Activated B cell treated with CpG ODN at 0.5 μM for 24 hours (primary cell): ENCODE measurements at regions of chr18 and their contacts with region 1.

Region 1: GRCh38 chr18:58699551-58699950 is 28.3 kb downstream of the MALT1 start:
- DNase-seq: no peak
- ATAC-seq: no peak
- H3K4me3 Mint-ChIP-seq: no peak overlapping the region
- H3K27ac Mint-ChIP-seq: no peak overlapping the region
- H3K4me1 Mint-ChIP-seq: peaks cover 7% of the 10 kb centered on the region
- H3K27me3 Mint-ChIP-seq: no peaks in the 10 kb centered on the region
- CTCF ChIP-seq: no peak

Region 2: GRCh38 chr18:58639751-58640427 is 59.7 kb before region 1 on chr18:
- CTCF ChIA-PET with region 1: no interaction called
- POLR2A ChIA-PET with region 1: no interaction called
- intact Hi-C with region 1: no loop called
- DNase-seq: no peak
- ATAC-seq: peak; percentile 62
- H3K4me3 Mint-ChIP-seq: peak overlapping the region; percentile 21
- H3K27ac Mint-ChIP-seq: peak overlapping the region; percentile 71
- H3K4me1 Mint-ChIP-seq: peaks cover 22% of the 10 kb centered on the region
- H3K27me3 Mint-ChIP-seq: no peaks in the 10 kb centered on the region
- CTCF ChIP-seq: no peak

Region 3: GRCh38 chr18:58716060-58716756 is 16.7 kb after region 1 on chr18:
- CTCF ChIA-PET with region 1: no interaction called
- POLR2A ChIA-PET with region 1: no interaction called
- intact Hi-C with region 1: loop called (anchors 2 kb)
- DNase-seq: no peak
- ATAC-seq: peak; percentile 58
- H3K4me3 Mint-ChIP-seq: peak overlapping the region; percentile 29
- H3K27ac Mint-ChIP-seq: peak overlapping the region; percentile 82
- H3K4me1 Mint-ChIP-seq: peaks cover 46% of the 10 kb centered on the region
- H3K27me3 Mint-ChIP-seq: no peaks in the 10 kb centered on the region
- CTCF ChIP-seq: no peak

Region 4: DNA sequence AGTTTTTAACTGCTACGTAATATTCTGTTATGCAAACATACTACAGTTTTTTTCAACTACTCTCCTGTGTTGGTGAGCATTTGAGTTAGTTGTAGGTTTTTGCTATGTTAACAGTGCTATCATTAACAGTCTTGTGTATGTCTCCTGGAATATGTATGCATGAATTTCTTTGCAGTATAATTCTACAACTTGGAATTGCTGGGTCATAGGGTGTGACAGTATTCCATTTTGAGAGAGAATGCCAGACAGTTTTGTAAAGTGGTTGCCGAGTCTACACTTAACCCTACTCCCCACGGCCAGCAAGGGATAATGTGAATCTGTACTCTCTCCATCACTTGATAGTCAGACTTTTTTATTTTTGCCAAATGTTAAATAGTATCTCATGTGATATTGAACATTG is 38.8 kb after region 1 on chr18:
- CTCF ChIA-PET with region 1: no interaction called
- POLR2A ChIA-PET with region 1: no interaction called
- intact Hi-C with region 1: loop called (anchors 5 kb)
- DNase-seq: no peak
- ATAC-seq: no peak
- H3K4me3 Mint-ChIP-seq: no peak overlapping the region
- H3K27ac Mint-ChIP-seq: no peak overlapping the region
- H3K4me1 Mint-ChIP-seq: peaks cover 10% of the 10 kb centered on the region
- H3K27me3 Mint-ChIP-seq: no peaks in the 10 kb centered on the region
- CTCF ChIP-seq: no peak